Breast epithelium (tissue), 4 donors: ENCODE measurements at regions of chr12 and their contacts with region 1.

Region 1: GRCh38 chr12:127343940-127344339 is 923.0 kb upstream of the TMEM132C start:
- DNase-seq: no peak
- H3K4me3 ChIP-seq: no peak overlapping the region
- H3K27ac ChIP-seq: no peak overlapping the region
- H3K4me1 ChIP-seq: no peaks in the 10 kb centered on the region
- H3K27me3 ChIP-seq: peaks cover 0 to 4% of the 10 kb centered on the region in 2 donors
- CTCF ChIP-seq: no peak
- POLR2A ChIP-seq: no peak

Region 2: GRCh38 chr12:127411166-127411915 is 67.4 kb after region 1 on chr12:
- intact Hi-C with region 1: loop called (anchors 2 kb)
- DNase-seq: no peak
- H3K4me3 ChIP-seq: no peak overlapping the region
- H3K27ac ChIP-seq: no peak overlapping the region
- H3K4me1 ChIP-seq: no peaks in the 10 kb centered on the region
- H3K27me3 ChIP-seq: no peaks in the 10 kb centered on the region
- CTCF ChIP-seq: no peak
- POLR2A ChIP-seq: no peak